OCI-LY7 (cell line): ENCODE measurements at regions of chr13 and their contacts with region 1.

Region 1: GRCh38 chr13:52159321-52160086 is at the start of gene NEK3:
- DNase-seq: peak; percentile 83
- H3K4me3 ChIP-seq: peak within 1 kb of the TSS; percentile 84
- H3K27ac ChIP-seq: peak within 1 kb of the TSS; percentile 7
- H3K4me1 ChIP-seq: peaks cover 14% of the 10 kb centered on the region
- CTCF ChIP-seq: no peak
- total RNA-seq, gene NEK3: 18.2 and 28.4 TPM in 2 replicates

Region 2: DNA sequence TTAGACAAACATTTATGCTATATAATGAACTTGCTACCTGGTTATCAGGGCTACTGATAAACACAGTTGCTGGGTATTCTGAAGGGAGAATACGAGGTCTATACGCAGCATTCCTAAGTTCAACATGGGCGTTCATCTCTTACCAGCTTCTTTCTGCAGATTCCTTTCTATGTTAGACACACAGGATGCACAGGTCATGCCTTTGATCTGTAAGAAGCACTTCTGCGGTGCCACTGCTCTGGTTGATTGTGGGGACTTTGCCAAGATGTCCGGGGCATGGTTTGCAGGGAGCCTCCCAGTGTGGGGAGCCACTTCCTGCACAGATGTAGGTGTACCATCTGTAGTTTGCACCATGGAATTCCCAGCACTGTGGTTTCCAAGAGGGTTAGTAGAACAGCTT is 189.2 kb before region 1 on chr13:
- CTCF ChIA-PET with region 1: no interaction called
- POLR2A ChIA-PET with region 1: no interaction called
- intact Hi-C with region 1: no loop called
- DNase-seq: no peak
- H3K4me3 ChIP-seq: no peak overlapping the region
- H3K27ac ChIP-seq: no peak overlapping the region
- H3K4me1 ChIP-seq: no peaks in the 10 kb centered on the region
- CTCF ChIP-seq: no peak

Region 3: DNA sequence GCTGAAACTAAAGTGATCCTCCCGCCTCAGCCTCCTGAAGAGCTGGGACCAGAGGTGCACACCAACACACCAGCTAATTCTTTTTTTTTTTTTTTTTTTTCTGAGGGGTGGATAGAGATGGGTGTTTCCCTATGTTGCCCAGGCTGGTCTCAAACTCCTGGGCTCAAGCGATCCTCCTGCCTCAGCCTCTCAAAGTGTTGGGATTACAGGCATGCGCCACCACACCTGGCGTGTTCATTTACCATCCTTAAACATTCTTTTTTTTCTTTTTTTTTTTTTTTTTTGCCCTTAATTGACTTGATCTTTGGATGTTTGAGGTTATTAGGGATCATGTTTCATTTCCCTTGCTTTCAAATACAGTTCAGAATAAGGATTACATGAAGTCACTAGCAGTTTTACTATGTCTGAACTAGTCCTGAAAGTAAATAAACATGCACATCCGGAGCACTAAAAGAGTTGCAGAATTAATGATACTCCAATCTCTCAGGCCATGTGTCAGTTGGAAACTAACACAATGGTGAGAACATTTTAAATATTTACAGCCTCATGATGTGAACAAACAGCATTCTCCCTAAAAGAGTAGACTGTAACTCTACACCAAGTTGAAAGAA is 124.8 kb before region 1 on chr13:
- CTCF ChIA-PET with region 1: no interaction called
- POLR2A ChIA-PET with region 1: no interaction called
- intact Hi-C with region 1: no loop called
- DNase-seq: no peak
- H3K4me3 ChIP-seq: no peak overlapping the region
- H3K27ac ChIP-seq: no peak overlapping the region
- H3K4me1 ChIP-seq: no peaks in the 10 kb centered on the region
- CTCF ChIP-seq: no peak

Region 4: GRCh38 chr13:52194184-52194868 is 34.8 kb after region 1 on chr13:
- CTCF ChIA-PET with region 1: no interaction called
- POLR2A ChIA-PET with region 1: no interaction called
- intact Hi-C with region 1: loop called (anchors 5 kb)
- DNase-seq: peak; percentile 89
- H3K4me3 ChIP-seq: peak overlapping the region; percentile 94
- H3K27ac ChIP-seq: peak overlapping the region; percentile 71
- H3K4me1 ChIP-seq: peaks cover 13% of the 10 kb centered on the region
- CTCF ChIP-seq: no peak